ENCODE measurements at regions of chr2 and their contacts with region 1.

Region 1: GRCh38 chr2:224799691-224800090 is 83.5 kb upstream of the CCDC195 start:
- DNase-seq: no peak
- H3K4me3 Mint-ChIP-seq: no peak overlapping the region
- H3K27ac Mint-ChIP-seq: no peak overlapping the region
- H3K4me1 Mint-ChIP-seq: no peaks in the 10 kb centered on the region
- H3K27me3 Mint-ChIP-seq: no peaks in the 10 kb centered on the region

Region 2: DNA sequence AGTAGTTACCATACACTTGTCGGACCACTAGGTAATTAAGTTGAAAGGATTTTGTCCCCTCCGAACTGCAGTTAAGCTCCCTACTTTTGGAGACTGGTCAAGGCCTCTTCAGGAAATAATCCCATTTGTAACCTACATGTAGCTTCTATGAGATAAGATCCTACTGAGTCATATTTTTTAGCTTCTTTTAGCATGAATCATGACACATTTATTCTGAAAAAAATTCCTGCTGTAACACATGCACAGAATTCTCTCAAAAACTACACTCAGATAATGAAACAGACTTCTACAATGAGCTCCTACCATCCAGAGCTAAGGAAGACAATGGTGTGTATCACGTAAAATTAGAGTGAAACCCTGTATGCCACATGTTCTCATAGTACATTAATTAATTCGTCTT is 17.1 kb after region 1 on chr2:
- CTCF ChIA-PET with region 1: no interaction called
- intact Hi-C with region 1: loop called (anchors 2 kb)
- DNase-seq: no peak
- H3K4me3 Mint-ChIP-seq: no peak overlapping the region
- H3K27ac Mint-ChIP-seq: peak overlapping the region; percentile 32
- H3K4me1 Mint-ChIP-seq: peaks cover 1% of the 10 kb centered on the region
- H3K27me3 Mint-ChIP-seq: no peaks in the 10 kb centered on the region

Measured in activated naive CD4-positive, alpha-beta T cell treated with anti-CD3 and anti-CD28 coated beads for 36 hours (primary cell).